Posterior vena cava (tissue), 2 donors: ENCODE measurements at regions of chr3 and their contacts with region 1.

Region 1: GRCh38 chr3:137304313-137305056 is 346.7 kb downstream of the IL20RB start:
- DNase-seq: no peak

Region 2: DNA sequence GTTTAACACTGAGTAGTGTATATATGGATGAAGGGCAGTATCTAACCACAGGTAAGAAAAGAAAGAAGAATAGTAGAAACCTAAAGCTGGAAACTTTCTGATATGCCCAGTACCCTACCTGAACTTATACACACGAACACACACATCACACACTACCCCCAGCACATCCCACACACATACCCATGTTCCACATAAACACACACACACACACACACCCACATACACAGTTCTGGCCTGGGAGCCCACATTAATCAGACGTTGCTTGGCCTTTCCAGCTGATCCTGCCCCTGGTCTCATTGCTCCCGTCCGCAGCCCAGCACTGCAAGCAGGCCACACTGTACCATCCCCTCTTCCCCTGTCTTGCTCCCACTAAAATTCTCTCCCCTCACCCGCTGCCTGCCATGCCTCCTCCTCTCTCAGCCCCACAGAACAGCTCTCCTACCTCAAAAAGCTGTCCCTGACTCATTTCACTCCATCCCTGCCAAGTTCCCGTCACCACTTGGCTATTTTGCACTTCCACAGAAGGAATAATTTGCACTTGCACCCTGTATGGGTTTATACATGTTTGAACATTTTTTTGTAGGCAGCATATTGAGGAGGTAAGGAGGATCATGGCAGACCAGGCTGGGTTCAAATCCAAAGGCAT is 1524.8 kb before region 1 on chr3:
- intact Hi-C with region 1: loop called in 1 of 2 experiments (anchors 5 kb)
- DNase-seq: no peak

Region 3: DNA sequence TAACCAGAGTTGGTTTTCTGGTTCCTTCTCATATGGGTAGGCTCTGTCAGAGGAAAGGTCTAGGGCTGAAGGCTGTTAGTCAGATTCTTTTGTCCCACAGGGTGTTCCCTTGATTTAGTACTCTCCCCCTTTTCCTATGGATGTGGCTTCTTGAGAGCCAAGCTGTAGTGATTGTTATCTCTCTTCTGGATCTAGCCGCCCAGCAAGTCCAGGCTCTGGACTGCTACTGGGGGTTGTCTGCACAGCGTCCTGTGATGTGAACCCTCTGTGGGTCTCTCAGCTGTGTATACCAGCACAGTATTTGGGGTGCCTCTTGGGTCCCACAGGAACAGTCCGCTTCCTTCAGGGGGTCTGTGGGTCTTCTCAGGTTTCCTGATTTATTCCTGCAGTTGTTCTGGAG is 1268.2 kb before region 1 on chr3:
- intact Hi-C with region 1: loop called in 1 of 2 experiments (anchors 10 kb)
- DNase-seq: no peak